ENCODE measurements at regions of chr2 and their contacts with region 1.

Region 1: GRCh38 chr2:41998186-41999127 is 49.4 kb upstream of the PKDCC start:
- DNase-seq: peak in 1 of 2 experiments; percentile 23
- H3K4me3 ChIP-seq: no peak overlapping the region
- H3K27ac ChIP-seq: no peak overlapping the region
- H3K4me1 ChIP-seq: no peaks in the 10 kb centered on the region
- H3K27me3 ChIP-seq: no peaks in the 10 kb centered on the region
- CTCF ChIP-seq: no peak

Region 2: DNA sequence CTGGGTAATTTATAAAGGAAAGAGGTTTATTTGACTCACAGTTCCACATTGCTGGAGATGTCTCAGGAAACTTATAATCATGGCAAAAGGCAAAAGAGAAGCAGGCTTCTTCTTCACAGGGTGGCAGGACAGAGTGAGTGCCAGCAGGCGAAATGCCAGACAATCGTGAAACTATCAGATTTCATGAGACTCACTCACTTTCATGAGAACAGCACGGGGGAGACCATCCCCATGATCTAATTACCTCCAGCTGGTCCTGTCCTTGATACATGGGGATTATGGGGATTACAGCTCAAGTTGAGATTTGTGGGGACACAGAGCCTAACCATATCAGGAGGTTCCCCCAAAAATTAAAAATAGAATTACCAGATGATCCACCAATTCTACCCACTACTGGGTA is 871.1 kb before region 1 on chr2:
- CTCF ChIA-PET with region 1: no interaction called
- POLR2A ChIA-PET with region 1: interaction called, 29 read pairs
- intact Hi-C with region 1: no loop called
- DNase-seq: no peak
- H3K4me3 ChIP-seq: no peak overlapping the region
- H3K27ac ChIP-seq: no peak overlapping the region
- H3K4me1 ChIP-seq: no peaks in the 10 kb centered on the region
- H3K27me3 ChIP-seq: no peaks in the 10 kb centered on the region
- CTCF ChIP-seq: no peak

Region 3: GRCh38 chr2:41414486-41415230 is 583.8 kb before region 1 on chr2:
- CTCF ChIA-PET with region 1: no interaction called
- POLR2A ChIA-PET with region 1: no interaction called
- intact Hi-C with region 1: no loop called
- DNase-seq: peak in 1 of 2 experiments; percentile 41
- H3K4me3 ChIP-seq: no peak overlapping the region
- H3K27ac ChIP-seq: no peak overlapping the region
- H3K4me1 ChIP-seq: no peaks in the 10 kb centered on the region
- H3K27me3 ChIP-seq: no peaks in the 10 kb centered on the region
- CTCF ChIP-seq: peak; percentile 77